Activated CD4-positive, alpha-beta T cell treated with anti-CD3 and anti-CD28 coated beads, Interleukin-2, amount 10 ng/mL, durations not matched to agents 24 days and 14 days (primary cell): ENCODE measurements at regions of chr1 and their contacts with region 1.

Region 1: DNA sequence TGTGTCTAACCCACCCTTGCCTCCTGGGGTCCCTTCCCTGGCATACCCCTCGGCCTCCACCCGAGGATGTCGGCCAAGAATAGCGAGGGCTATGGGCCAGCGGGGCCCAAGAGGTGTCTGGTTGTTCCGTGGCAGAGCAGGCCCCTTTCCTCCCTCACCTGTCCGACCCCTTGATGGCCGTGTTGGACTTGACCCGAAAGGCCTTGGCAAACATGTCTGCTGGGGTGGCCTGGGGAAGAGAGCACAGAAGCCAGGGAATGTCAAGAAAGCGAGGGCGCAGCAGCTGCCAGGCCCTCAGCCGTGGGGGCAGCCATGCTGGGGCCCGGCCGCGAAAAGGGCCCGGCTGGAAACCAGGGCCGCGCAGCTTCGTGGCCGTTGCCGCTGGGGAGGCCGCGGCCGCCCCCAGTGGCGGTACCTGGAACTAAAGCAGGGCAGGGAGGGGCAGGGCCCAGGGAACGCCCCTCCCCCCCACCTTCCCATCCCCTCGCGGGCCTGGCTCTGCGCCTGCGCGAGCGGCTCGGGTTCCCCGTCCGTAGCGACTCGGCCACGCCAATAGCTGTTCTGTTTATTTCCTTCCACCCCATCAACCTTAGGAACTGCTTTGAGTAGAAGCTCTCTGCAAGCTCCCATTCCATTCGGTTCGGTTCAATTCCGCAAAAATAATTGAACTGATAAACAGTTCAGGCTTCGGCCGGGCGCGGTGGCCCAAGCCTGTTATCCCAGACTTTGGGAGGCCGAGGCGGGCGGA is at the start of gene EIF2D:
- DNase-seq: peak; percentile 98
- H3K4me3 Mint-ChIP-seq: peak within 1 kb of the TSS; percentile 99
- H3K27ac Mint-ChIP-seq: peak within 1 kb of the TSS; percentile 93
- H3K4me1 Mint-ChIP-seq: peaks cover 29% of the 10 kb centered on the region
- H3K27me3 Mint-ChIP-seq: peaks cover 12% of the 10 kb centered on the region
- total RNA-seq, gene EIF2D: 86.6 and 89.4 TPM in 2 replicates

Region 2: GRCh38 chr1:206544562-206545257 is 67.6 kb before region 1 on chr1:
- intact Hi-C with region 1: no loop called
- DNase-seq: peak; percentile 96
- H3K4me3 Mint-ChIP-seq: no peak overlapping the region
- H3K27ac Mint-ChIP-seq: peak overlapping the region; percentile 66
- H3K4me1 Mint-ChIP-seq: peaks cover 17% of the 10 kb centered on the region
- H3K27me3 Mint-ChIP-seq: no peaks in the 10 kb centered on the region

Region 3: DNA sequence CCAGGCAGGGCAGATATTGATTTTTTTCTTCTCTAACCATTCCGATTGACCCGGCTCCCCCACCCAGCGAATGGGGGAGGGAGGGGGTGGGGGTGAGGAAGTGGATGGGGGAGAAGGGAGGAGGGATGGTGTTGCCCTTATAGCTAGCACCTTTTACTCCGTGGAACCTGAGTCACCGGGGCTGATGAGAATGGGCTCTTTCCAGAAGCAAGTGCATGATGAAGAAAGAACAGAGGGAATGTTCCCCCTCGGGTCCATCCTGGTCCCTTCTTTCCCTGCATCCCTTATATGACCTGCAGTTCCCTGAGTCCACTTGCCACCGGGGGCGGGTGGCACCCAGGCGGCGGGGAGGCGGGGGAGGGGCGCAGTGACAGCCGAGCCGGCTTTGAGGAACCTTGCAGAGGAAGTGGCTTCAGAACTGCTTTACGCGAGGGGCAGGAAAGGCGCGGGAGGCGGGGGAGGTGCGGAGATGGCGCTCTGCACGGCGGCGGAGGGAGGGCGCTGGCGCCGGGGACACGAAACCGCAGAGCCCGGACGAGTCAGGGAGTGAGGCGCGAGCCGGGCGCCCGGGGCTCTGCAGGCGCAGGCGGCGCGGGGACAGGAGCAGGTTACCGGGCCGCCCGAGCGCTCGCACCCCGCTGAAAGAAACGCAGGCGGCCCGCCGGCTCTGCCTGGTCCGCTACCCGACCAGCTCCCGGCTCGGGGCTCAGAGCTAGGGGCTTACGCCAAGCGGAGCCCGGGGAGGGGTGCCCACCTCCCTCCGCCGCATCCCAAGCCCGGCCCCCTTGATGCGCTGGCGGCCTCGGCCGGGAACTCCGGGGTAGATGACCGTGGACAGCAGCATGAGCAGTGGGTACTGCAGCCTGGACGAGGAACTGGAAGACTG is 55.3 kb before region 1 on chr1:
- intact Hi-C with region 1: loop called (anchors 1 kb)
- DNase-seq: peak; percentile 97
- H3K4me3 Mint-ChIP-seq: peak overlapping the region; percentile 98
- H3K27ac Mint-ChIP-seq: peak overlapping the region; percentile 93
- H3K4me1 Mint-ChIP-seq: peaks cover 69% of the 10 kb centered on the region
- H3K27me3 Mint-ChIP-seq: no peaks in the 10 kb centered on the region

Region 4: DNA sequence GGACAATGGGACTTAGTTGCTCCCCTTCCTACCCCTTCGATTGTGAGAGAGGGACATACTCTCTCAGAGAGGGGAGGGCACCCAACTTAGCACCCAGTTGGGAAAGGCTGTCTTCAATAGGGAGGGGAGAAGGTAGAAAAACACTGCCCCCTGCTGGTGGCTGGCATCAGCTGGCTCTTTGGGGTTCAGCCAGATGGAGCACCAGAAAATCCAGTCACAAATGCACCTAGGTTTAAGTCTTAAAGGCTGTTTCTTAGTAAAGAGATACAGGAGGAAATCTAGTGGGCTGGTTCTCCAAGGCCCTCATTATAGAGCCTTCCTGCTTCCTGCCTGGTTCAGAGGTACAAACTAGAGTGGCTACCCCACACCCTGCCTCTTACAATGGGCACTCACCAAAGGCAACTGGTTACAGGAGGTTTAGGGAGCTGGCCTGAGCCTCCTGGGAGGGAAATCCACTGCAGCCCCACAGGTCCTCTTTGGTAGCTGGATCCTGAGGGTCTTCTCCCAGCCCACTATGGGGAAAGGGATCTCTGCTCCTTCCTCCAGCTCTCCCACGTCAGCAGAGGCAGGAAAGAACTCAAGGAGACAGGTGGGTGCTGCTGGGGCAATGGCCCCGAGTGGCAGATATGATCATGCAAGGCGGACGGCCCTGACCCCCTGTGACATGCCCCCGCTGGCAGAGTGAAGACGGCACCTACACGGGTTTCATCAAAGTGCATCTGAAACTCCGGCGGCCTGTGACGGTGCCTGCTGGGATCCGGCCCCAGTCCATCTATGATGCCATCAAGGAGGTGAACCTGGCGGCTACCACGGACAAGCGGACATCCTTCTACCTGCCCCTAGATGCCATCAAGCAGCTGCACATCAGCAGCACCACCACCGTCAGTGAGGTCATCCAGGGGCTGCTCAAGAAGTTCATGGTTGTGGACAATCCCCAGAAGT is 28.3 kb before region 1 on chr1:
- intact Hi-C with region 1: loop called (anchors 1 kb)
- DNase-seq: peak; percentile 94
- H3K4me3 Mint-ChIP-seq: peak overlapping the region; percentile 84
- H3K27ac Mint-ChIP-seq: peak overlapping the region; percentile 100
- H3K4me1 Mint-ChIP-seq: peaks cover 83% of the 10 kb centered on the region
- H3K27me3 Mint-ChIP-seq: no peaks in the 10 kb centered on the region

Region 5: GRCh38 chr1:206663832-206664652 is 51.7 kb after region 1 on chr1:
- intact Hi-C with region 1: loop called (anchors 1 kb)
- DNase-seq: peak; percentile 92
- H3K4me3 Mint-ChIP-seq: peak overlapping the region; percentile 57
- H3K27ac Mint-ChIP-seq: peak overlapping the region; percentile 39
- H3K4me1 Mint-ChIP-seq: peaks cover 34% of the 10 kb centered on the region
- H3K27me3 Mint-ChIP-seq: peaks cover 2% of the 10 kb centered on the region

Region 6: DNA sequence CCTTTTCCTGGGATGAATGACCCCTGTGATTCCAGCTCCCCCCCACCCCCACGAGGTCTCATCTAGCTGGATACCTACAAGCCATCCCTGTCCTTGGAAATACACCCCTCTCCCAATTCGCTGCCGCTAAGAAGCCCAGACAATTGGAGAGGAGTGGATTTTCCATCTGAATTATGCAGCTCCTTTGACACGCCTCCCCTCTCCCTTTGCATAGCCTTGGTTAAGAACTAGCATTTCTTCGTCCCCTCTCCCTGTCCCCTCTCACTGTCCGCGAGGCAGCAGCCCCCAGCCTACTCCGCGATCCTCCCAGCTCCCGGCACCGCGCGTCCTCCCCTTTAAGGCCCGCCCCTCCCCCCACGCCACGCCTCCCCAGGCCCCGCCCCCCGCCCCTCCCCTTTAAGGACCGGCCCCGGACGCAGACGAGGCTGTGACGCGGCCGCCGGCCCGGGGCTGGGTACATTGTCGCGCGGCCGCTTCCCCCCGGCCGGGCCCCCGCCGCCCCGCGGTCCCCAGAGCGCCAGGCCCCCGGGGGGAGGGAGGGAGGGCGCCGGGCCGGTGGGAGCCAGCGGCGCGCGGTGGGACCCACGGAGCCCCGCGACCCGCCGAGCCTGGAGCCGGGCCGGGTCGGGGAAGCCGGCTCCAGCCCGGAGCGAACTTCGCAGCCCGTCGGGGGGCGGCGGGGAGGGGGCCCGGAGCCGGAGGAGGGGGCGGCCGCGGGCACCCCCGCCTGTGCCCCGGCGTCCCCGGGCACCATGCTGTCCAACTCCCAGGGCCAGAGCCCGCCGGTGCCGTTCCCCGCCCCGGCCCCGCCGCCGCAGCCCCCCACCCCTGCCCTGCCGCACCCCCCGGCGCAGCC is 72.4 kb after region 1 on chr1 and contains the start of gene MAPKAPK2:
- intact Hi-C with region 1: loop called (anchors 1 kb)
- DNase-seq: peak; percentile 91
- H3K4me3 Mint-ChIP-seq: peak within 1 kb of the TSS; percentile 99
- H3K27ac Mint-ChIP-seq: peak within 1 kb of the TSS; percentile 95
- H3K4me1 Mint-ChIP-seq: peaks cover 53% of the 10 kb centered on the region
- H3K27me3 Mint-ChIP-seq: peaks cover 7% of the 10 kb centered on the region
- total RNA-seq, gene MAPKAPK2: 95.1 and 97.4 TPM in 2 replicates

Region 7: DNA sequence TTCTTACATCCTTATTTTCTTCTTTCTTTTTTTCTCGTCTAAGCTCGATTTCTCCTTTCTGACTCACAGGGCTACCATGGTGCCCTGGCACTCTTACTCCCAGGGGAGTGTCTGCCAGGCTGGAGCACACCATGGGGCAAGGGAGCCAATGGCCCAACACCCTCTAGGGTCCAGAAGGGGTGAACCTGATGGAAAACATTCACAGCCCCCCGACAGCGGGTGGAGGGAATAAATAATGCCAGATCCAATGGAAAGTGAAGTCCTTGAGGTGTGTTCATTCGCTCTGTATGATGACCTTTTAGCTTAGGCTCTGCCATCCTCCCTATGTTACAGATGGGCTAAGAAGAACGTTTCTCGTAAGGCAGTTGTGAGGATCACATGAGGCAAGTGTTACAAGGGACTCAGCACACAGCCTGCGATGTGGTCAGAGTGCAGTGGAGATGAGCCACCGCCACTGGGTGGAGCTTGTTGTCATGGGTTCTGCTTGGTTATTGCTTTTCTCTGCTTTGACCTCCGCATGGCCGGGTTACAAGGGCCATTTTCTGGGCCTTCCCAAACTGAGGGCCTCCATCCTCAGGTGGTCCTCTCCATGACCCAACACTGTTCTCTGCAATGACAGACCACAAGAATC is 312.9 kb after region 1 on chr1:
- intact Hi-C with region 1: loop called (anchors 5 kb)
- DNase-seq: peak; percentile 85
- H3K4me3 Mint-ChIP-seq: no peak overlapping the region
- H3K27ac Mint-ChIP-seq: no peak overlapping the region
- H3K4me1 Mint-ChIP-seq: peaks cover 24% of the 10 kb centered on the region
- H3K27me3 Mint-ChIP-seq: no peaks in the 10 kb centered on the region